ENCODE measurements at regions of chrX and their contacts with region 1.

Region 1: GRCh38 chrX:135521405-135522189 is 1.1 kb downstream of the INTS6L start:
- DNase-seq: peak; percentile 90
- H3K4me3 Mint-ChIP-seq: peak overlapping the region; percentile 88
- H3K27ac Mint-ChIP-seq: peak overlapping the region; percentile 92
- H3K4me1 Mint-ChIP-seq: peaks cover 5% of the 10 kb centered on the region
- H3K27me3 Mint-ChIP-seq: peaks cover 28% of the 10 kb centered on the region
- CTCF ChIP-seq: no peak

Region 2: GRCh38 chrX:135531813-135532212 is 10.2 kb after region 1 on chrX:
- CTCF ChIA-PET with region 1: no interaction called
- POLR2A ChIA-PET with region 1: interaction called, 65 read pairs
- intact Hi-C with region 1: no loop called
- DNase-seq: peak; percentile 47
- H3K4me3 Mint-ChIP-seq: no peak overlapping the region
- H3K27ac Mint-ChIP-seq: peak overlapping the region; percentile 67
- H3K4me1 Mint-ChIP-seq: peaks cover 15% of the 10 kb centered on the region
- H3K27me3 Mint-ChIP-seq: peaks cover 43% of the 10 kb centered on the region
- CTCF ChIP-seq: no peak

Region 3: DNA sequence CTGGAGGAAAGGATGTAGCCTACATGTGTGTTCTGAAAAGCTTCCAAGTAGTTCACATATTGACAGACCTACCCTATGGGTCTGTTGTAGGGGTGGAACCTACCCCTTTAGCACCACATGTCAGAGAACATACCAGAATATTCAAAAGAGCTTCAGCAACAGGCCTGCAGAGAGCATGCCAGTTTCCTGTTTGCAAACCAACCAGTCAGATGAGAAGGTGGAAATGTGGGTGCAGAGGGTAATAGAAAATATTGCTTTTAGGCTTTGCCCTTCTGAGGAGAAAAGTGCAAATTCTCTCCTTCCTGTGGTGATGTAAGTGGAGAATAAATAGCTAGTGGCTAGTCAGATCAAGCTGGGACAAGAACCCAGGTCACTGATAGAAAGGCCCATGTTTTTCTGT is 15.3 kb after region 1 on chrX:
- CTCF ChIA-PET with region 1: no interaction called
- POLR2A ChIA-PET with region 1: interaction called, 65 read pairs
- intact Hi-C with region 1: no loop called
- DNase-seq: no peak
- H3K4me3 Mint-ChIP-seq: no peak overlapping the region
- H3K27ac Mint-ChIP-seq: no peak overlapping the region
- H3K4me1 Mint-ChIP-seq: peaks cover 6% of the 10 kb centered on the region
- H3K27me3 Mint-ChIP-seq: peaks cover 46% of the 10 kb centered on the region
- CTCF ChIP-seq: no peak

Region 4: GRCh38 chrX:135572436-135572835 is 50.8 kb after region 1 on chrX:
- CTCF ChIA-PET with region 1: interaction called, 3 read pairs
- POLR2A ChIA-PET with region 1: interaction called, 4 read pairs
- intact Hi-C with region 1: loop called (anchors 1 kb)
- DNase-seq: no peak
- H3K4me3 Mint-ChIP-seq: no peak overlapping the region
- H3K27ac Mint-ChIP-seq: no peak overlapping the region
- H3K4me1 Mint-ChIP-seq: no peaks in the 10 kb centered on the region
- H3K27me3 Mint-ChIP-seq: peaks cover 24% of the 10 kb centered on the region
- CTCF ChIP-seq: peak; percentile 55

Region 5: GRCh38 chrX:136405126-136405525 is 883.5 kb after region 1 on chrX:
- CTCF ChIA-PET with region 1: no interaction called
- POLR2A ChIA-PET with region 1: no interaction called
- intact Hi-C with region 1: no loop called
- DNase-seq: no peak
- H3K4me3 Mint-ChIP-seq: no peak overlapping the region
- H3K27ac Mint-ChIP-seq: no peak overlapping the region
- H3K4me1 Mint-ChIP-seq: no peaks in the 10 kb centered on the region
- H3K27me3 Mint-ChIP-seq: peaks cover 73% of the 10 kb centered on the region
- CTCF ChIP-seq: no peak

Measured in MCF 10A (cell line).